Left ventricle myocardium inferior (tissue), 1 donor: ENCODE measurements at regions of chr19 and their contacts with region 1.

Region 1: DNA sequence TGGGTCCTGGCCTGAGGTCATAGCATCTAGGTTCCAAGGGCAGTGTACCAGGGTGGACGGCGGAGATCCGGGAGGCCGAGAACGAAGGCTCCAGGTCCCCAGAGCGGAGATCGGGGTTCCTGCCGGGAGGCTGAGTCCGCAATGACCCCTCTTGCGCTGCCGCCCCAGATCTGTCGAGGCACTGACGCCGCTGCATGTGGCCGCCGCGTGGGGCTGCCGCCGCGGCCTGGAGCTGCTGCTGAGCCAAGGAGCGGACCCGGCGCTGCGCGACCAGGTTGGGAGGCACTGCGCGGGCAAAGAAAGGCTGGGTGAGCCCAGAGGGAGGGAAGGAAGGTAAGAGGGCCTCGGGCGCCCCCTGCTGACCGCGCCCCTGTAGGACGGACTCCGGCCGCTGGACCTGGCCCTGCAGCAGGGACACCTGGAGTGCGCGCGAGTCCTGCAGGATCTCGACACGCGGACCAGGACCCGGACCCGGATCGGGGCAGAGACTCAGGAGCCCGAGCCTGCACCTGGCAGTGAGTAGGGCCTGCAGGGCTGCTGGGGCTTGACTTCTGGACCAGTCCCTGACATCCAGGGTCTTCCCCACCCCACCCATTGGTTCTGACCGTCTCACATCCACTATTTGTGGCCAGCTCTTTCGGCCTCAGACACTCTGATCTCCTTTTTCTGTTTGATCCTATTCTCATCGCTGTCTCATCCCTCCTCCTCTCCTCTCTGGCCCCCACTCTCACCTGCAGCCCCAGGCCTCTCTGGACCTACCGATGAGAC is 971 bp downstream of the ANKLE1 start:
- DNase-seq: peak; percentile 81
- H3K4me3 ChIP-seq: peak overlapping the region; percentile 61
- H3K27ac ChIP-seq: no peak overlapping the region
- H3K4me1 ChIP-seq: peaks cover 18% of the 10 kb centered on the region
- H3K27me3 ChIP-seq: peaks cover 31% of the 10 kb centered on the region
- CTCF ChIP-seq: peak; percentile 95

Region 2: DNA sequence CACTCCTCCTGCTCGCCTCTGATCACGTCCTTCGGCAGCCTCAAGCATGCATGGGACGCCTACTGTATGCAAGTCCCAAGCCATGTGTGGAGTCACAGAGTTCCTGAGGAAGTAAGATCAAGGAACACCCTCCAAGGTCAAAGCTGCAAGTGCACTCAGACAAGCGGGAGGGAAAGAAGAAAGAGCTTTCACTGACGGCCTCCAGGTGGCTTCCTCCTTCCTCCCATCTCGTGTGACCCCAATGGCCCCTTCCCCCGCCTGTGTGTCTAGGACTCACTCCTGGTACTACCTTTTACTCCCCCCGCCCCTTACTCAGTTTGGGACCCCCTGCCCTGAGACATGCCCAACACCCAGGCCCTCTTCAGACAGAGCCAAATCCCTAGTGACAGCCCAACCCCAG is 213.5 kb before region 1 on chr19:
- intact Hi-C with region 1: loop called (anchors 5 kb)
- DNase-seq: no peak
- H3K4me3 ChIP-seq: no peak overlapping the region
- H3K27ac ChIP-seq: no peak overlapping the region
- H3K4me1 ChIP-seq: peaks cover 35% of the 10 kb centered on the region
- H3K27me3 ChIP-seq: no peaks in the 10 kb centered on the region
- CTCF ChIP-seq: no peak